ENCODE measurements at regions of chr11 and their contacts with region 1.

Region 1: GRCh38 chr11:33065445-33066178 is 26.2 kb downstream of the TCP11L1 start:
- DNase-seq: peak; percentile 64 to 77 (median 70)
- ATAC-seq: peak; percentile 82
- H3K4me3 ChIP-seq: no peak overlapping the region
- H3K27ac ChIP-seq: no peak overlapping the region
- H3K4me1 ChIP-seq: no peaks in the 10 kb centered on the region
- H3K27me3 ChIP-seq: no peaks in the 10 kb centered on the region
- CTCF ChIP-seq: peak; percentile 79 to 85 (median 83)
- POLR2A ChIP-seq: no peak

Region 2: GRCh38 chr11:32960553-32961164 is 105.0 kb before region 1 on chr11:
- intact Hi-C with region 1: loop called (anchors 5 kb)
- DNase-seq: no peak
- ATAC-seq: no peak
- H3K4me3 ChIP-seq: no peak overlapping the region
- H3K27ac ChIP-seq: no peak overlapping the region
- H3K4me1 ChIP-seq: no peaks in the 10 kb centered on the region
- H3K27me3 ChIP-seq: no peaks in the 10 kb centered on the region
- CTCF ChIP-seq: peak; percentile 17 to 76 (median 68)
- POLR2A ChIP-seq: no peak